AG04449 (cell line): ENCODE measurements at regions of chr1 and their contacts with region 1.

Region 1: GRCh38 chr1:85307987-85308832 is 31.8 kb upstream of the BCL10 start:
- DNase-seq: no peak
- H3K4me3 ChIP-seq: no peak overlapping the region
- CTCF ChIP-seq: peak; percentile 99

Region 2: DNA sequence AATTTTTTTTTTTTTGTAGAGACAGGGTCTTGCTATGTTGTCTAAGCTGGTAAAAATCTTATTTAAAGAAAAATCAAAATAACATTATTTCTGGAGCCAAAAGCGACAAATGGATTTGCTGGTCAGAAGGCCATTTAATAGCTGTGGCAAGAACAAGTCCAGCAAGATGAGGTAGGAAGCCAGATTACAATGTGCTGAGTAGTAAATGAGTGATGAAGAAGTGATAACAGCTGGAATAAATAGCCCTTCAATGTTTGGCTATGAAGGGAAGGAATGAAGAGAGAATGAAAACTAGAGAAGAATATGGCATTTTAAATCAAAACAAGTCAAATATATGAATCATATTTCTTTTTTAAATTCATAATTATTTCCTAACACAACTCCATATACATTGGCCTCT is 141.9 kb before region 1 on chr1:
- CTCF ChIA-PET with region 1: no interaction called
- POLR2A ChIA-PET with region 1: no interaction called
- DNase-seq: no peak
- H3K4me3 ChIP-seq: no peak overlapping the region
- CTCF ChIP-seq: no peak

Region 3: DNA sequence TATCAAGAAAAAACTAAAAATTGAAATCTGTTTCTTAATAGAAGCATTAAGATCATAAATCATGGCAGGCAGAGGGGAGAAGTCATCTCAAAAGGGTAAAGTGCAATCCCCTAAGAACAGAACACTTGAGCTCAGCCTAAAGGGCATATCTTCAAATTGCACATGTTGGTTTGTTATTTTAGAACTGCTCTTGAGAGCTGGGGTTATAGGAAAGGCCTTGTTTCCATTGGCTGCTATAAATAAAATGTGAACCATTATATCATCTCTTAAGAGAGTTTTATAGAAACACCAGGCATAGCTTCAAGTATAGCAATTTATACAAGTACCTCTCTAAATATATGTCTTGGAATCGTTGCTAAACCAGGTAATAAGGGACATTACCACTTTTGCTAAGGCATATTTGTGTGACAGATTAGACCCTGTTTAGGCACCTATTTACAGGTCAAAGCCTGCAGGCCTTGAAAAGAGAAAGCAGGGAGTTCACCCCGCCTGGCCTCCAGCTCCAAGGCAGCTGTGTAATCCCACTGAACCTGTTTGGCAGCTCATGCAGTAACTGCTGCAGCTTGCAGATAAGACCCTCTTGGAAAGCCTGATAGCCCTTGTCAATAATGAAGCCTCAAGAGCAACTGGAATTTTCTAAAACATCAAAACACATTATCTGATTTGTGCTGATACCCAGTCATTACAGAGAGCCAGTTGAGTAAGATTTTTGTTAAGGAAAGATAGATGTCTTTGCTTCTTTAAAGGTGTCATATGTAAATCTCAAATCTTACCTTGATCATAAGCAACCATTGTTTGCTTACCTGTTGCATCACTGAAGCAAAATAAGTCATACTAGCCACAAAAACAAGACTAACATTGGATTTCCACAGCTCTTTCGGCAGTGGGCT is 83.2 kb before region 1 on chr1:
- CTCF ChIA-PET with region 1: no interaction called
- POLR2A ChIA-PET with region 1: no interaction called
- DNase-seq: no peak
- H3K4me3 ChIP-seq: no peak overlapping the region
- CTCF ChIP-seq: no peak

Region 4: DNA sequence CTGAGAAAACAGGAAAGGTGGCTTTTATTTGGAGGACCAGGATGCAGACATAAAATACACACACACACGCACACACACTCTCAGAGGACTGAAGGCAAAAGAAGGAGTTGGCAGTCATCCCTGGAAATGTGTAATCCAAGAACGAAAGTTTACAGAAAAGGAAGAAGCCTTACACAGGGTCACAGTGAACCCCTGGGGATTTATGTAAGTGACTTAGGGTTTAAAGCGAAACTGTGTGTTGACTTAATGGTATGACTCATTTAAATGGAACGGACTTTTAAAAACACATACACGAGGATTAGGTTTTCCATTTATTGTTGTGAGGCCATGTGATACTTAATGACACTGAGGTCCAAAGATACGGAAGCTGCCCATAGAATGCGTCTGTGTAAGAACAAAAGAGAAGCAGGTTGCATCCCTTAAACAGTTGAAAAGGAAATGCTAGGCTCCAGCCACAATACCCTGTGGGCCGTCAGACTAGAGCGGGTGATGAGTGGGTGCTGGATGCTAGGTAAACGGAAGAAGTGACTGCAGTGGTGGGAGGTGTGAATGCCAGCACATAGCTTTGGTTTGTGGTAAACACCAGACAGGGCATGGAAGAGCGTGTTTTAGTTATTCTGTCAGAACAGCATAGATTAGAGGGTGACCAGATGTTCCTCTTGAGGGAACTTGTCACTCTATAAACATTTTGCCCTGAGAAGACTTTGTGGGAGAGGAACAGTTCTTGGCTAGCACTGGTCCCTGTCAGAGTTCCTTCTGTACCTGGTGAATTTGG is 10.2 kb before region 1 on chr1:
- CTCF ChIA-PET with region 1: interaction called, 29 read pairs
- POLR2A ChIA-PET with region 1: no interaction called
- DNase-seq: peak; percentile 96
- H3K4me3 ChIP-seq: peak overlapping the region; percentile 2
- CTCF ChIP-seq: no peak

Region 5: GRCh38 chr1:85344256-85344694 is 36.1 kb after region 1 on chr1:
- CTCF ChIA-PET with region 1: interaction called, 18 read pairs
- POLR2A ChIA-PET with region 1: interaction called, 6 read pairs
- DNase-seq: no peak
- H3K4me3 ChIP-seq: no peak overlapping the region
- CTCF ChIP-seq: peak; percentile 76

Region 6: GRCh38 chr1:85398391-85399064 is 90.3 kb after region 1 on chr1:
- CTCF ChIA-PET with region 1: interaction called, 13 read pairs
- POLR2A ChIA-PET with region 1: no interaction called
- DNase-seq: no peak
- H3K4me3 ChIP-seq: no peak overlapping the region
- CTCF ChIP-seq: peak; percentile 17

Region 7: DNA sequence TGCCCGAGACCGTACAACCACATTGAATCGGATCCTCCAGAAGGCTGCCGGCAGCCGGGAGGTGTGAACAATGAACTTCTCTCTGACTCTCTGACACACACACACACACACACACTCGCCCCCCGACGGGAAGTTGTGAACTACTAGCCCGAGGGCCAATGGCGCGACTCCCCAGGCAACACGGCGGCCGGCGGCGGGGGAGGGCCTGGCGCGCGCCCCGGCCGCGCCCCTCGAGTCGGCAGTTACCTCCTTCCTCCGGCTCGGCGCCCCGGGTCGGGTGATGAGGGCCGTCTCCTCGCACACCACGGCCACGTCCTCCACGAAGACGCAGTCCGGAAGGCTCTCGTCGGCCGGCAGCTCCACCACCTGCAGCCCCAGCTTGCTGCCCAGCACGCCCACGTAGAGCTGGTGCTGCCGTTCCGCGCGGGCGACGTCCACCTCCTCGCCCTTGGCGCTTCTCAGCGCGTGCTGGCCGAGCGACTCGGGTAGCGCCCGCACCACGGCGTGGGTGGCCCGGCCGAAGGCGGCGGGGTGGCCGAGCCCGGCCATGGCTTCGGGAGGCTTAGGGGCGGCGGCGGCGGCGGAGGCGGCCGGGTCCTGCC is 156.4 kb after region 1 on chr1:
- CTCF ChIA-PET with region 1: interaction called, 30 read pairs
- POLR2A ChIA-PET with region 1: no interaction called
- DNase-seq: no peak
- H3K4me3 ChIP-seq: peak overlapping the region; percentile 66
- CTCF ChIP-seq: no peak

Region 8: GRCh38 chr1:85692730-85693314 is 384.6 kb after region 1 on chr1:
- CTCF ChIA-PET with region 1: interaction called, 27 read pairs
- POLR2A ChIA-PET with region 1: no interaction called
- DNase-seq: no peak
- H3K4me3 ChIP-seq: no peak overlapping the region
- CTCF ChIP-seq: peak; percentile 1